Naive thymus-derived CD4-positive, alpha-beta T cell (primary cell): ENCODE measurements at regions of chr11 and their contacts with region 1.

Region 1: GRCh38 chr11:4072668-4073285 is 21.8 kb upstream of the RRM1 start:
- DNase-seq: peak in 7 of 9 donors; percentile 58 to 80 (median 75)
- ATAC-seq: peak; percentile 90
- H3K4me3 ChIP-seq: no peak overlapping the region
- H3K4me3 Mint-ChIP-seq: no peak overlapping the region
- H3K27ac ChIP-seq: peak overlapping the region; percentile 55
- H3K27ac Mint-ChIP-seq: peak overlapping the region; percentile 7 to 92 (median 85)
- H3K4me1 ChIP-seq: peaks cover 8 to 25% of the 10 kb centered on the region in 2 donors
- H3K4me1 Mint-ChIP-seq: peaks cover 32 to 78% (median 74%) of the 10 kb centered on the region in 7 donors
- H3K27me3 ChIP-seq: no peaks in the 10 kb centered on the region
- H3K27me3 Mint-ChIP-seq: no peaks in the 10 kb centered on the region

Region 2: DNA sequence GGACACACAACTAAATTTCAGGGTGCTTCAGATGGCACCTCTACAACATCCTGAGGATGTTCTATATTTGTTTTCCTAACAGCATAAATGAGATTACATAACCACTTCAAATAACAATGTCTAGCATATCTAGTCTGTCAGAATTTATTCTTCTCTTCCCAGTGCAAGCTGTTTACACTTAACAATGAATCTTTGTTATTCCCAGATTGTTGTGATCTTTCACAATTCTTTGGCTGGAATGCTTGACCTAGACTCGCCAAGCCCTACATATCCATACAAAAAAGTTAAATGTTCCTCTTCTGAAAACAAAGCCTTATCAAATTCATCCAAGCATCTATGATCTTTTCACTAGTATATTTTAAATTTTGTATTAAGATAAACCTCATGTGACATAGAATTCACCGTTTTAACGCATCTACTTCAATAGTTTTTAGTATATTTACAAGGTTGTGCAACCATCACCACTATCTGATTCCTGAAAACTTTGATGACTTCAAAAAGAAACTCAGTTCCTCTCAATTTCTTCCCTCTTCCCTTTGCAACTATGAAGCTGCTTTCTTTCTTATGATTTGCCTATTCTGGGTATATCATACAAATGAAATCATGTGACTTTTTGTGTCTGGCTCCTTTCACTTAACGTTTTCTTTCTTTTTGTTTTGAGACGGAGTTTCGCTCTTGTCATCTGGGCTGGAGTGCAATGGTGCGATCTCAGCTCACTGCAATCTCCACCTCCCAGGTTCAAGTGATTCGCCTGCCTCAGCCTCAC is 339.9 kb before region 1 on chr11:
- CTCF ChIA-PET with region 1: no interaction called
- POLR2A ChIA-PET with region 1: no interaction called
- intact Hi-C with region 1: loop called in 1 of 2 experiments (anchors 5 kb)
- DNase-seq: peak in 4 of 9 donors; percentile 2 to 15 (median 5)
- ATAC-seq: no peak
- H3K4me3 ChIP-seq: no peak overlapping the region
- H3K4me3 Mint-ChIP-seq: peak overlapping the region in 1 of 10 donors; percentile 19
- H3K27ac ChIP-seq: no peak overlapping the region
- H3K27ac Mint-ChIP-seq: peak overlapping the region; percentile 13 to 91 (median 78)
- H3K4me1 ChIP-seq: no peaks in the 10 kb centered on the region
- H3K4me1 Mint-ChIP-seq: peaks cover 6 to 28% (median 21%) of the 10 kb centered on the region in 7 donors
- H3K27me3 ChIP-seq: no peaks in the 10 kb centered on the region
- H3K27me3 Mint-ChIP-seq: no peaks in the 10 kb centered on the region

Region 3: GRCh38 chr11:3841426-3842350 is 231.1 kb before region 1 on chr11:
- CTCF ChIA-PET with region 1: interaction called, 164 read pairs
- POLR2A ChIA-PET with region 1: interaction called, 21 read pairs
- intact Hi-C with region 1: no loop called
- DNase-seq: peak; percentile 82 to 98 (median 95)
- ATAC-seq: peak; percentile 84
- H3K4me3 ChIP-seq: peak overlapping the region; percentile 51
- H3K4me3 Mint-ChIP-seq: peak overlapping the region; percentile 76 to 99 (median 91)
- H3K27ac ChIP-seq: peak overlapping the region; percentile 95
- H3K27ac Mint-ChIP-seq: peak overlapping the region; percentile 87 to 99 (median 97)
- H3K4me1 ChIP-seq: peaks cover 30 to 34% of the 10 kb centered on the region in 2 donors
- H3K4me1 Mint-ChIP-seq: peaks cover 19 to 64% (median 54%) of the 10 kb centered on the region in 7 donors
- H3K27me3 ChIP-seq: no peaks in the 10 kb centered on the region
- H3K27me3 Mint-ChIP-seq: no peaks in the 10 kb centered on the region

Region 4: GRCh38 chr11:3880724-3881123 is 192.1 kb before region 1 on chr11:
- CTCF ChIA-PET with region 1: interaction called, 3 read pairs
- POLR2A ChIA-PET with region 1: no interaction called
- intact Hi-C with region 1: loop called in 1 of 2 experiments (anchors 1 kb)
- DNase-seq: no peak
- ATAC-seq: peak; percentile 38
- H3K4me3 ChIP-seq: no peak overlapping the region
- H3K4me3 Mint-ChIP-seq: peak overlapping the region in 9 of 10 donors; percentile 4 to 63 (median 41)
- H3K27ac ChIP-seq: peak overlapping the region; percentile 17
- H3K27ac Mint-ChIP-seq: peak overlapping the region; percentile 1 to 87 (median 68)
- H3K4me1 ChIP-seq: peaks cover 32 to 39% of the 10 kb centered on the region in 2 donors
- H3K4me1 Mint-ChIP-seq: peaks cover 59 to 90% (median 85%) of the 10 kb centered on the region in 7 donors
- H3K27me3 ChIP-seq: no peaks in the 10 kb centered on the region
- H3K27me3 Mint-ChIP-seq: no peaks in the 10 kb centered on the region

Region 5: GRCh38 chr11:3920148-3920852 is 152.5 kb before region 1 on chr11:
- CTCF ChIA-PET with region 1: no interaction called
- POLR2A ChIA-PET with region 1: no interaction called
- intact Hi-C with region 1: no loop called
- DNase-seq: peak in 2 of 9 donors; percentile 48 to 62
- ATAC-seq: peak; percentile 86
- H3K4me3 ChIP-seq: no peak overlapping the region
- H3K4me3 Mint-ChIP-seq: peak overlapping the region in 7 of 10 donors; percentile 12 to 66 (median 44)
- H3K27ac ChIP-seq: no peak overlapping the region
- H3K27ac Mint-ChIP-seq: peak overlapping the region in 5 of 9 donors; percentile 22 to 53 (median 30)
- H3K4me1 ChIP-seq: peaks cover 11 to 35% of the 10 kb centered on the region in 2 donors
- H3K4me1 Mint-ChIP-seq: peaks cover 39 to 70% (median 62%) of the 10 kb centered on the region in 7 donors
- H3K27me3 ChIP-seq: no peaks in the 10 kb centered on the region
- H3K27me3 Mint-ChIP-seq: no peaks in the 10 kb centered on the region

Region 6: GRCh38 chr11:3939211-3939610 is 133.6 kb before region 1 on chr11:
- CTCF ChIA-PET with region 1: interaction called, 24 read pairs
- POLR2A ChIA-PET with region 1: interaction called, 3 read pairs
- intact Hi-C with region 1: loop called (anchors 1 kb)
- DNase-seq: no peak
- ATAC-seq: no peak
- H3K4me3 ChIP-seq: no peak overlapping the region
- H3K4me3 Mint-ChIP-seq: peak overlapping the region in 1 of 10 donors; percentile 26
- H3K27ac ChIP-seq: no peak overlapping the region
- H3K27ac Mint-ChIP-seq: peak overlapping the region in 8 of 9 donors; percentile 44 to 95 (median 76)
- H3K4me1 ChIP-seq: peaks cover 26 to 49% of the 10 kb centered on the region in 2 donors
- H3K4me1 Mint-ChIP-seq: peaks cover 56 to 92% (median 84%) of the 10 kb centered on the region in 7 donors
- H3K27me3 ChIP-seq: no peaks in the 10 kb centered on the region
- H3K27me3 Mint-ChIP-seq: no peaks in the 10 kb centered on the region

Region 7: DNA sequence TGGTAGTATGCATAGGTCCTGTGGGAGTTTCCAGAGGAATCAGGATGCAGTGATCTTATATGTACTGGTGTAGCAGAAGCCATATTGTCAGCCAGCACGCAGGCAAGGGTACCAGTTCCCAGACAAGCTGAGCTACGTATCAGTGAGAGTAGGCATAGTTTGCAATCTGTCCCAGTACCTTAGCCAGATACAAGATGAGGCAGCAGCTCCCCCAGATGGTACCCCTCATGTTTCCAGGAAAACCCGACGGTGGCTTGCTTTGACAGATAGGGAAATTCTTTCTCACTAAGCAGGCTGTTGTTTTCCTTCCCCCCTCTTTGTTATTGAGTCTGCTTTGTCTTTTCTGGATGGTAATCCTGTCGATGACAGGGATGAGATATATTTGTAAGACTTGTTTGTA is 87.9 kb before region 1 on chr11:
- CTCF ChIA-PET with region 1: interaction called, 8 read pairs
- POLR2A ChIA-PET with region 1: interaction called, 5 read pairs
- intact Hi-C with region 1: loop called in 1 of 2 experiments (anchors 5 kb)
- DNase-seq: peak in 8 of 9 donors; percentile 23 to 55 (median 36)
- ATAC-seq: peak; percentile 69
- H3K4me3 ChIP-seq: no peak overlapping the region
- H3K4me3 Mint-ChIP-seq: peak overlapping the region in 8 of 10 donors; percentile 1 to 43 (median 3)
- H3K27ac ChIP-seq: peak overlapping the region; percentile 5
- H3K27ac Mint-ChIP-seq: peak overlapping the region in 8 of 9 donors; percentile 26 to 90 (median 82)
- H3K4me1 ChIP-seq: peaks cover 20 to 45% of the 10 kb centered on the region in 2 donors
- H3K4me1 Mint-ChIP-seq: peaks cover 53 to 99% (median 93%) of the 10 kb centered on the region in 7 donors
- H3K27me3 ChIP-seq: no peaks in the 10 kb centered on the region
- H3K27me3 Mint-ChIP-seq: no peaks in the 10 kb centered on the region

Region 8: GRCh38 chr11:4094348-4095291 is 21.8 kb after region 1 on chr11 and contains the start of gene RRM1:
- CTCF ChIA-PET with region 1: interaction called, 5 read pairs
- POLR2A ChIA-PET with region 1: interaction called, 4 read pairs
- intact Hi-C with region 1: loop called (anchors 2 kb)
- DNase-seq: peak; percentile 88 to 96 (median 94)
- ATAC-seq: peak; percentile 95
- H3K4me3 ChIP-seq: peak within 1 kb of the TSS; percentile 83
- H3K4me3 Mint-ChIP-seq: peak within 1 kb of the TSS; percentile 92 to 99 (median 97)
- H3K27ac ChIP-seq: peak within 1 kb of the TSS; percentile 97
- H3K27ac Mint-ChIP-seq: peak within 1 kb of the TSS; percentile 94 to 99 (median 98)
- H3K4me1 ChIP-seq: peaks cover 46 to 63% of the 10 kb centered on the region in 2 donors
- H3K4me1 Mint-ChIP-seq: peaks cover 63 to 90% (median 84%) of the 10 kb centered on the region in 7 donors
- H3K27me3 ChIP-seq: no peaks in the 10 kb centered on the region
- H3K27me3 Mint-ChIP-seq: no peaks in the 10 kb centered on the region
- total RNA-seq, gene RRM1: 33.6 to 140 (median 40.3) TPM